Psoas muscle (tissue), 8 donors: ENCODE measurements at regions of chr12 and their contacts with region 1.

Region 1: GRCh38 chr12:120761519-120761934 is 35.9 kb downstream of the ACADS start:
- DNase-seq: no peak
- ATAC-seq: peak; percentile 78 to 87 (median 82)
- H3K4me3 ChIP-seq: peak overlapping the region; percentile 41
- H3K27ac ChIP-seq: peak overlapping the region; percentile 87
- H3K4me1 ChIP-seq: peaks cover 45% of the 10 kb centered on the region
- H3K27me3 ChIP-seq: no peaks in the 10 kb centered on the region
- CTCF ChIP-seq: no peak

Region 2: GRCh38 chr12:120814203-120814902 is 52.8 kb after region 1 on chr12:
- intact Hi-C with region 1: no loop called
- DNase-seq: no peak
- ATAC-seq: peak in 1 of 4 donors; percentile 51
- H3K4me3 ChIP-seq: no peak overlapping the region
- H3K27ac ChIP-seq: no peak overlapping the region
- H3K4me1 ChIP-seq: peaks cover 14% of the 10 kb centered on the region
- H3K27me3 ChIP-seq: no peaks in the 10 kb centered on the region
- CTCF ChIP-seq: no peak

Region 3: DNA sequence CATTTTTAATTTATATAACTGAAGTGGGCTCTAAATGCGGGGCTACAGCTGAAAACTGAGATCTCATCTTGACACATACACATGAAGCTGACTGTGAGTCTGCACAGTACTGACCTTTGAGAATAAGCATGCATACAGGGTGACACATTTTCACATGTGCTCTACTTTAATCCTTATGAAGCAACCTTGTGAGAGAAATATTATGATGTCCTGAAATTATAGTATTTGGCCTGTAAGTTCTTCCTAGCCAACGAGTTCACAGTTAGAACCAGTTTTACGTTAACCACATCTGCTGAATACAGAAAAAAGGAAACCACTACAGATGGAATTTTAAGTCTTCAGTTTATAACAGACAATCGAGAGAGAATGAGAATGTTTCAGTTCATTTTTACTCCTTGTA is 72.3 kb after region 1 on chr12:
- intact Hi-C with region 1: loop called in 1 of 2 experiments (anchors 10 kb)
- DNase-seq: no peak
- ATAC-seq: peak; percentile 91 to 94 (median 94)
- H3K4me3 ChIP-seq: no peak overlapping the region
- H3K27ac ChIP-seq: peak overlapping the region; percentile 74
- H3K4me1 ChIP-seq: peaks cover 54% of the 10 kb centered on the region
- H3K27me3 ChIP-seq: no peaks in the 10 kb centered on the region
- CTCF ChIP-seq: no peak